ENCODE measurements at regions of chr12 and their contacts with region 1.

Region 1: DNA sequence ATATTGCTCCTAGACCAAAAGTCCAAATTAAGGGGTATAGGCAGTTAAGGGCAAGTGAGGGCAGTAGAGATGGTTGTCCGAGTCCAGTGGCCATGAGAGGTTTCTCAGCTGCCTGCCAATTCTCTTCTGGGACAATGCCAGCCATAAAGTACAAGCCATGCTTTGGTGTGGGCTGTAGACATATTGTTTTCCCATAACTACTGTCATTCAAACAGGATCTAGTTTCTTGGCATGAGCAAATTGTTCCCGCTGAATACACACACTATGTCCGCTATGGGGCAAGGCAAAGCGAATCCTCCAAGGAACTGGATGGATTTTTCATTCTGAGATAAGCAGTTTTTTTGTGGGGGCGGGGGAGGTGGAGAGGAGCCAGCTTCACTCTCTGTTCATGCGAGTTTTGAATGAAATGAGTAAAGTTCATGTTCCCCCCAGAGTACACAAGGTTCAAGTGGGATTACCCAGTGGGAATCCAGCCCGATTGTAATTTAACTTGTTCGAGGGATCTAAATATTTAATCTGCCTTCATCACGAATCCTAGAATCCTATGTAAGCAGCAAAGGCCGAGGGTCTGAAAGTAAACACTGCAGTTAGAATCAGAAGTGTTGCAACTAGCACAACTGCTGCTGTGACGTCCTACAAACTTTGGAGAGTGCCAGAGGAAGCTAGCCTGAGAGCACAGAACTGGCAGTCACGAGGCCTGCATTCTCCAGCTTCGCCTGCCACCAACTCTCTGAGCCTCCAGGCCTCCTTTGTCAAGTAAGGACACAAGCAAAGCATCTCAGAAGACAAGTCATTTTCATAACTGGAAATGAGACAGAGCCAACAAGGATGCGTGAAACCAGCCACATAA is 137.0 kb downstream of the CRADD start:
- DNase-seq: peak in 8 of 10 donors; percentile 36 to 74 (median 62)
- H3K4me3 ChIP-seq: peak overlapping the region in 15 of 59 donors; percentile 2 to 48 (median 14)
- H3K27ac ChIP-seq: peak overlapping the region in 50 of 59 donors; percentile 9 to 85 (median 56)
- H3K27me3 ChIP-seq: no peaks in the 10 kb centered on the region
- CTCF ChIP-seq: peak in 2 of 56 donors; percentile 3 to 7

Region 2: DNA sequence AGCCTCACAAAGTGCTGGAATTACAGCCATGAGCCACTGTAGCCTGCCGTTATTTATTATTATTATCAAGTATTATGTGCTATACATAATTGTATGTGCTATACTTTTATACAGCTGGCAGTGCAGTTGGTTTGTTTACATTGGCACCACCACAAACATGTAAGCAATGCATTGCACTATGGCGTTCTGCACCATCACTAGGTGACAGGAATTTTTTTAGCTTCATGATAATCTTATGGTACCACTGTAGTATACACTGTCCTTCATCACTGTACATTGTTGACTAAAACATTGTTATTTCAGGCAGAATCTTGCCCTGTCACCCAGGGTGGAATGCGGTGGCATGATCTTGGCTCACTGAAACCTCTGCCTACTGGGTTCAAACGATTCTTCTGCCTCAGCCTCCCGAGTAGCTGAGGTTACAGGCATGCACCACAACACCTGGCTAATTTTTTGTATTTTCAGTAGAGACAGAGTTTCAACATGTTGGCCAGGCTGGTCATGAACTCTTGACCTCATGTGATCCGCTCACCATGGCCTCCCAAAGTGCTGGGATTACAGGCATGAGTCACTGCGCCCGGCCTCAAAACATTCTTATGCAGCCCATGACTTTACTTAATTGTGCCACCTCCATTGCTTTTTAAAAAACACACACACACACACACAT is 329.7 kb before region 1 on chr12:
- intact Hi-C with region 1: no loop called
- DNase-seq: no peak
- H3K4me3 ChIP-seq: no peak overlapping the region
- H3K27ac ChIP-seq: no peak overlapping the region
- H3K27me3 ChIP-seq: no peaks in the 10 kb centered on the region
- CTCF ChIP-seq: no peak

Region 3: DNA sequence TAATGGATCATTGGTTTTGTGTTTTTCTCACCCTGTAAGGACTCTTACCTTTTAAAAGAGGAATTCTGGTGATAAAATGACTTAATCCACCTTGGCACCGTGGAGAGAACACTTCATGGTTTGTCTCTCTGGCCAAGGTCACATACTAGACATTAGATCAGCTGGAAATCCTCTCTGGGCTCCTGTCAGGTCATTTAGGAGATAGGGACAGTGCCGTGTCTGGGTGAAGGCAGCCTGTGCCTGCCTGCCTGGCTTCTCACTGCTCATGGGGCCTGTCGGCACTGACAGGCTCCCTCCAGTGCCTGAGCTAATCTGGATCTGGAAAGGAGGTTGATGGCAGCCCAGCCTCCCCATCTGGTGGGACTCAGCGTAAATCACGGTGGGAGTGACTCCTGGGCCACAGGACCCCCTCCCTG is 131.3 kb before region 1 on chr12:
- intact Hi-C with region 1: loop called in 1 of 2 experiments (anchors 10 kb)
- DNase-seq: no peak
- H3K4me3 ChIP-seq: no peak overlapping the region
- H3K27ac ChIP-seq: no peak overlapping the region
- H3K27me3 ChIP-seq: no peaks in the 10 kb centered on the region
- CTCF ChIP-seq: no peak

Region 4: DNA sequence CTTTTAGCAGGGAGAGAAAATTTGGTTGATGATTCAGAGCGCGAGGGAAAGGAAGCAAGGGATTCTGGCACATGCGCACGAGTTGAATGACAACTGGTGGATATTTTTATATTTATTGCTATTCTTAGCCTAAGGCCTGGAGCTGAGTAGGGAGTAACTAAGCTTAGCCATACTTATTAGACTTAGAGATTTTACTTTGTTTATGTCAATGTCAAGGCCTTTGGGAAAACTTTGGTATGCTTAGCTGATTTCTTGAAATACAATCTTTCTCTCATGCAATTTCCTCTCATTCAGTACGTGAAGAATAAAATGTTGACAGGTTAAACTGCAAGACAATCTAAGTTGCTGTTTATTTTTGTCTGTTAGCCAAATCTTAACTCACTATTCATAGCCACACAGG is 35.9 kb before region 1 on chr12:
- intact Hi-C with region 1: loop called (anchors 5 kb)
- DNase-seq: peak in 1 of 10 donors; percentile 22
- H3K4me3 ChIP-seq: peak overlapping the region in 1 of 59 donors; percentile 9
- H3K27ac ChIP-seq: peak overlapping the region in 50 of 59 donors; percentile 1 to 93 (median 76)
- H3K27me3 ChIP-seq: no peaks in the 10 kb centered on the region
- CTCF ChIP-seq: no peak

Region 5: GRCh38 chr12:93894391-93895088 is 80.3 kb after region 1 on chr12:
- intact Hi-C with region 1: loop called in 1 of 2 experiments (anchors 5 kb)
- DNase-seq: peak; percentile 24 to 79 (median 72)
- H3K4me3 ChIP-seq: peak overlapping the region in 41 of 59 donors; percentile 1 to 51 (median 27)
- H3K27ac ChIP-seq: peak overlapping the region in 55 of 59 donors; percentile 12 to 85 (median 67)
- H3K27me3 ChIP-seq: no peaks in the 10 kb centered on the region
- CTCF ChIP-seq: peak in 2 of 56 donors; percentile 9 to 10

Region 6: GRCh38 chr12:94039914-94040313 is 225.7 kb after region 1 on chr12:
- intact Hi-C with region 1: no loop called
- DNase-seq: no peak
- H3K4me3 ChIP-seq: no peak overlapping the region
- H3K27ac ChIP-seq: no peak overlapping the region
- H3K27me3 ChIP-seq: no peaks in the 10 kb centered on the region
- CTCF ChIP-seq: no peak

Measured in dorsolateral prefrontal cortex (tissue), 120 donors.